Heart left ventricle (tissue), 16 donors: ENCODE measurements at regions of chr15 and their contacts with region 1.

Region 1: DNA sequence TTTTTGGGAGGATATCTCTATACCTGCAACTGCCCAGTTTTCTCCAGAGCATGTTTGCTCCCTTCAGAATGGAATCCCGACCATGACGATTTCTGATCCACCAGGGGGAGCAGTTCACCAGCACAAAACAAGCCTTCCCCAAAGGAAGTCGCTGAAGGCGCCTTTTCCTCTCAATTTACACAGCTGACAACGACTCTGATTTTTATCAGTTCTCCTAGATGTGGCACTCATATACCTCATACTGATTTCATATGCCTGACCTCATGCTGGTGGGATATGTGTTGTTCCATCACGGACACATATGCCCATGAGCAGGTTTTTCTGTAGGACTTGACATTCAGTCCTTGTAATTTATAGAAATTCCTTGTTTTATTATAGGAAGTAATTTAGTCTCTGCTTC is 1028.2 kb downstream of the MCTP2 start:
- DNase-seq: peak in 4 of 5 donors; percentile 51 to 65 (median 64)
- ATAC-seq: peak in 3 of 4 donors; percentile 70 to 83 (median 81)
- H3K4me3 ChIP-seq: no peak overlapping the region
- H3K27ac ChIP-seq: peak overlapping the region in 7 of 12 donors; percentile 12 to 68 (median 30)
- H3K4me1 ChIP-seq: peaks cover 0 to 36% (median 6%) of the 10 kb centered on the region in 12 donors
- H3K27me3 ChIP-seq: no peaks in the 10 kb centered on the region
- CTCF ChIP-seq: peak; percentile 64 to 92 (median 78)
- POLR2A ChIP-seq: no peak

Region 2: DNA sequence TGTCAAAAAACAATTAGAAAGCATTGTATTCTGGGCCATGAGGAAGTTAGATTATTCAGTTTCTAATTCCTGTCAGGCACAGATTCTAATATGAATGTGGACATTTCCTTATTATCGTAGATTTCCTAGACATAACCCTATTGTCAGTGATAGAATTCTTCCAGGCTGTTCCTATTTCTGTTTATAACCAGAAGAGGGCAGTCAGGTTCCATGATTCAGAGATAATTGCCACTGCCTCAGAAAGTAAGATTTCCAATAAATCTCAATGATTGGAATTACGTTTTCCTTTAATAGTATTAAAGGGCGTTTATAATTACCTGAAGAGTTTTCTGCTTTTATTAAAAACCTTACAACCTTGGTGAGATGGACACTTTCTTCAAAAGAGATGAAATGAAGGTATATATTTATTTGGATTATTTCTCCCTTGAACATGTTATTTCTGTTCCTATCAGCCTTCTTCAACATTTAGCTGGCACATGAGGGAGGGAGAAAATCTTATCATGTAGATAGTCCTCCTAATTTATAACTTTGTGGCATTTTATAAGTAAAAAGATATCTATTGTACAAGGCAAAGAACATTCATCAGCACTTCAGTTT is 589.0 kb before region 1 on chr15:
- intact Hi-C with region 1: loop called in 4 of 10 experiments (anchors 10 kb)
- DNase-seq: no peak
- ATAC-seq: peak in 2 of 4 donors; percentile 52 to 54
- H3K4me3 ChIP-seq: no peak overlapping the region
- H3K27ac ChIP-seq: peak overlapping the region in 2 of 12 donors; percentile 6 to 21
- H3K4me1 ChIP-seq: peaks cover 0 to 15% (median 5%) of the 10 kb centered on the region in 12 donors
- H3K27me3 ChIP-seq: peaks cover 0 to 7% (median 0%) of the 10 kb centered on the region in 9 donors
- CTCF ChIP-seq: peak; percentile 63 to 86 (median 72)
- POLR2A ChIP-seq: no peak

Region 3: DNA sequence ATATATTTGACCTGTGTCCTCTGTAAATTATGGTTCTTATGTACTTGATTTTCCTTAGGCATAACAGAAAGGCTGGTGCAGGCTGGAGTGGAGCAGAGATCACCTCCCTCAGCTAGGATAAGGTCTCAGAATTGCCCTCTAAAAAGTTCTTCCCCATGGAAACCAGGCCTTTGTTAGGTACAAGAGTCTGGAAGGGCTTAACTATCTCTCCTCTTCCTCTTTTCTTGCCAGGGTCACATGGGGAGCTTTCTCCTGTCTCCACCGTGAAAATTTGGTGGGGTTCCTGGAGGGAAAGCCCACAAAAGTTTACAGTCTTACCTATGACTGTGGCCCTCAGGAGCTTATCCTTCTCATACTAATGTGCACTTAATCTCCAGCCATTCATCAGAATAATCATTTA is 394.9 kb before region 1 on chr15:
- intact Hi-C with region 1: no loop called
- DNase-seq: no peak
- ATAC-seq: no peak
- H3K4me3 ChIP-seq: no peak overlapping the region
- H3K27ac ChIP-seq: no peak overlapping the region
- H3K4me1 ChIP-seq: no peaks in the 10 kb centered on the region
- H3K27me3 ChIP-seq: no peaks in the 10 kb centered on the region
- CTCF ChIP-seq: no peak
- POLR2A ChIP-seq: no peak

Region 4: DNA sequence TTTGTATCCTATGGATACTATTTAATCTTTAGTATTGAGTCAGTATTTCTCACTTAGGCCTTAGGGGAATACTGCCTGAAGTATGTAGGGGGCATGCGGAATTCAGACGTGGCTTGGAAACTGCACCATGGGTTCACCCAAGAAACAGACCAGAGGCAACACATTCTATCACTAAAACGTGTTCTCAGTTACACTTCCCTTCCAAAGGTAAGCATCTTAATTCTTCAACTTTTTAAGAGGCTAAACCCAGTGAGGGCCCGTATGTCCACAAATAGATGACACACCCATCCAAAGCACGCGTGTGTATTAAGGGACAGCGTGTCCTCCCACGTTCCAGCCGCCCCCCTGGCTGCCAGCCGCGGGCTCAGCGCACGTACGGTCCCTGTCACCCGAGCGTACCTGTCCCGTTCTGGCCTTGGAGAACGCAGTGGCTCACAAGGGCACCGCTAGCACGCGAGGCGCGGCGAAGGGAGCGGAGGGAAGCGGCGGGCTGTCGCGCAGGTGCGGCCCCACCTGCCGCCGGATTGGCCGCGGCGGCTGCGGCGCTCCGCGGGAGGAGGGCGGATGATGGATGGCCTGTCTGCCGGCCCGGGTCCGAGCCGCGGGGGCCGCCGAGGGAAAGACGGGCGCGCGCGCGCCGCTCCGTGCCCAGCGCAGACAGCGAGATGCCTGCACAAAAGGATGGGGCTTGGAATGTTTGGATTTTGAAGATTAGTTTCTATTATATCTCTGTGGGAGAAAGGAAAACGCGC is 67.1 kb after region 1 on chr15:
- intact Hi-C with region 1: loop called in 1 of 10 experiments (anchors 10 kb)
- DNase-seq: peak in 3 of 5 donors; percentile 20 to 56 (median 28)
- ATAC-seq: peak; percentile 35 to 62 (median 47)
- H3K4me3 ChIP-seq: peak overlapping the region; percentile 21 to 69 (median 55)
- H3K27ac ChIP-seq: peak overlapping the region; percentile 54 to 93 (median 86)
- H3K4me1 ChIP-seq: peaks cover 0 to 16% (median 0%) of the 10 kb centered on the region in 12 donors
- H3K27me3 ChIP-seq: peaks cover 0 to 14% (median 5%) of the 10 kb centered on the region in 9 donors
- CTCF ChIP-seq: no peak
- POLR2A ChIP-seq: no peak

Region 5: DNA sequence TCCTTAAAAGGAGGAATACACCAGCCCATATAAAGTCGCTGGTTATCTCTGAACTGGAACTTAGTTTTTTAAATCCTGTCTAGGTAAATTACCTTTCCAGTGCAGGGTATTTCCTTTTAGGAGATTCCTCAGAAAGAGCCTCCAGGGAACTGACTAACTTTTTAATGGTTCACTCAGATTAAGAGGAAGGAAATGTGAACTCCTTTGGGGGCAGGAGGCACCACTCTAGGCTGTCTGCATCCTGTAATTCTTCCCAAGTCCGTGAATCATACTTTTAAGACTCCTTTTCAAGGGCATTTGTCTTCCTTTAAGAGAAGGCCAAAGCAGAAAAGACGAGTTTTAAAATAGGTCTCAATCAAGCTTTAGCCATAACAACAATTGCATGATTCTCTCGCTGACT is 199.8 kb after region 1 on chr15:
- intact Hi-C with region 1: no loop called
- DNase-seq: no peak
- ATAC-seq: peak in 3 of 4 donors; percentile 44 to 82 (median 81)
- H3K4me3 ChIP-seq: no peak overlapping the region
- H3K27ac ChIP-seq: peak overlapping the region in 11 of 12 donors; percentile 1 to 73 (median 50)
- H3K4me1 ChIP-seq: peaks cover 0 to 32% (median 13%) of the 10 kb centered on the region in 12 donors
- H3K27me3 ChIP-seq: no peaks in the 10 kb centered on the region
- CTCF ChIP-seq: no peak
- POLR2A ChIP-seq: no peak

Region 6: GRCh38 chr15:96327155-96327741 is 1067.7 kb after region 1 on chr15:
- intact Hi-C with region 1: loop called in 3 of 10 experiments (anchors 5 to 10 kb)
- DNase-seq: no peak
- ATAC-seq: peak; percentile 28 to 64 (median 41)
- H3K4me3 ChIP-seq: peak overlapping the region; percentile 32 to 91 (median 72)
- H3K27ac ChIP-seq: peak overlapping the region; percentile 66 to 90 (median 82)
- H3K4me1 ChIP-seq: peaks cover 0 to 32% (median 5%) of the 10 kb centered on the region in 12 donors
- H3K27me3 ChIP-seq: peaks cover 0 to 87% (median 39%) of the 10 kb centered on the region in 9 donors
- CTCF ChIP-seq: peak; percentile 42 to 83 (median 70)
- POLR2A ChIP-seq: no peak

Region 7: GRCh38 chr15:96356494-96357455 is 1097.3 kb after region 1 on chr15:
- intact Hi-C with region 1: loop called in 1 of 10 experiments (anchors 10 kb)
- DNase-seq: peak; percentile 76 to 88 (median 80)
- ATAC-seq: peak; percentile 49 to 72 (median 63)
- H3K4me3 ChIP-seq: peak overlapping the region; percentile 35 to 77 (median 65)
- H3K27ac ChIP-seq: peak overlapping the region in 11 of 12 donors; percentile 44 to 77 (median 59)
- H3K4me1 ChIP-seq: peaks cover 0 to 66% (median 30%) of the 10 kb centered on the region in 12 donors
- H3K27me3 ChIP-seq: peaks cover 6 to 98% (median 61%) of the 10 kb centered on the region in 9 donors
- CTCF ChIP-seq: peak; percentile 93 to 99 (median 97)
- POLR2A ChIP-seq: peak in 1 of 2 donors; percentile 18

Region 8: GRCh38 chr15:97234851-97235610 is 1975.5 kb after region 1 on chr15:
- intact Hi-C with region 1: loop called in 4 of 10 experiments (anchors 5 to 10 kb)
- DNase-seq: peak in 3 of 5 donors; percentile 19 to 24 (median 24)
- ATAC-seq: peak in 3 of 4 donors; percentile 49 to 62 (median 60)
- H3K4me3 ChIP-seq: peak overlapping the region in 2 of 12 donors; percentile 17
- H3K27ac ChIP-seq: no peak overlapping the region
- H3K4me1 ChIP-seq: peaks cover 0 to 4% (median 0%) of the 10 kb centered on the region in 12 donors
- H3K27me3 ChIP-seq: peaks cover 0 to 3% (median 0%) of the 10 kb centered on the region in 9 donors
- CTCF ChIP-seq: peak; percentile 68 to 91 (median 82)
- POLR2A ChIP-seq: no peak